Mammary epithelial cell (primary cell): ENCODE measurements at regions of chr17 and their contacts with region 1.

Region 1: DNA sequence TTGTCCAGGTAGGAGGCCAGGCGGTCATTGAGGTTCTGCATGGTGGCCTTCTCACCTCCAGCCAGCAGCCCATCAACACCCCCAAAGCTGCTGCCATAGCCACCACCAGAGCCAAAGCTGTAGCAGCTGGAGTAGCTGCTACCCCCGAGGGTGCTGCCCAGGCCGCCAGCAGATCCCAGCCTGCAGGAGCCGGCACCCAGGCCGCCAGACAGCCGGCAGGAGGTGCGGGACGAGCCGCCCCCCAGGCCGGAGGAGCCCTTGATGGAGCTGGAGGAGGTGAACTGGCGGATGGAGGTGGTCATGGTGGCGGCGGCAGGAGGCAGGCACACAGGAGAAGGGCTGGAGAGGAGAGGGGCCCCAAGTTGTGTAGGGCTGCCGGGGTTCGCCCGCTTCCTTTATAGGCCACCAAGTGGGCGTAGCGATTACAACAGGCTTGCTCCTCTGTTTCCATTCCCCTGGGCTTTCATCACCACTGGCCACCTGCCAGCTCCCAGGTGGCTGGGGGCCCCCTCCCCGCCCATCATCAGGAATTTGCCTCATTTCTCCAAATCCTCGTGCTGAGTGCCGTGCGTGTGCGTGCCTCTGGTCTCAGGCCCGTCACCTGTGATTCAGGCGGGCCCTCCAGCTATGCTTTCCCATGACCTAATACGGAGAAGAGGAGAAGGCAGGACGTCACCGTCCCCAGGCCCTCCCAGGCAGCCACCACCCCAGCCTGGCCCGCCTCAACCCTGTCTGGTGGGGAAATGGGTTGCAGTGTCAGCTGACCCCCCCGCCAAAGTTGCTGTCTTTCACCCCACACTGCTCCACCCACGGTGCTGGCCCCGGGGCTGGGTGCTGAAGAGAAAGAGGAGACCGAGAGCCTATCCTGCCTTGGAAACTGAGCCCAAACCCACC is at the start of gene KRT17:
- DNase-seq: peak; percentile 99
- H3K4me3 ChIP-seq: peak within 1 kb of the TSS; percentile 57 to 86 (median 70)
- H3K27ac ChIP-seq: peak within 1 kb of the TSS; percentile 98
- H3K4me1 ChIP-seq: peaks cover 63% of the 10 kb centered on the region
- H3K27me3 ChIP-seq: no peaks in the 10 kb centered on the region
- CTCF ChIP-seq: peak in 1 of 2 donors; percentile 19
- total RNA-seq, gene KRT17: 10,365 to 24,723 TPM

Region 2: GRCh38 chr17:40956401-40957254 is 667.8 kb before region 1 on chr17:
- CTCF ChIA-PET with region 1: no interaction called
- dilution Hi-C with region 1: no loop called
- in situ Hi-C with region 1: no loop called
- intact Hi-C with region 1: loop called (anchors 1 kb)
- DNase-seq: peak; percentile 99
- H3K4me3 ChIP-seq: no peak overlapping the region
- H3K27ac ChIP-seq: peak overlapping the region; percentile 99
- H3K4me1 ChIP-seq: peaks cover 75% of the 10 kb centered on the region
- H3K27me3 ChIP-seq: no peaks in the 10 kb centered on the region
- CTCF ChIP-seq: no peak

Region 3: GRCh38 chr17:41579484-41580243 is 44.8 kb before region 1 on chr17:
- CTCF ChIA-PET with region 1: no interaction called
- dilution Hi-C with region 1: no loop called
- in situ Hi-C with region 1: loop called in 1 of 2 experiments (anchors 5 kb)
- intact Hi-C with region 1: loop called (anchors 1 kb)
- DNase-seq: peak; percentile 98
- H3K4me3 ChIP-seq: no peak overlapping the region
- H3K27ac ChIP-seq: peak overlapping the region; percentile 97
- H3K4me1 ChIP-seq: peaks cover 63% of the 10 kb centered on the region
- H3K27me3 ChIP-seq: no peaks in the 10 kb centered on the region
- CTCF ChIP-seq: peak; percentile 93 to 96

Region 4: GRCh38 chr17:41588126-41588810 is 36.2 kb before region 1 on chr17:
- CTCF ChIA-PET with region 1: no interaction called
- dilution Hi-C with region 1: loop called (anchors 5 kb)
- in situ Hi-C with region 1: loop called in 1 of 2 experiments (anchors 5 kb)
- intact Hi-C with region 1: no loop called
- DNase-seq: peak; percentile 69
- H3K4me3 ChIP-seq: no peak overlapping the region
- H3K27ac ChIP-seq: peak overlapping the region; percentile 82
- H3K4me1 ChIP-seq: peaks cover 29% of the 10 kb centered on the region
- H3K27me3 ChIP-seq: no peaks in the 10 kb centered on the region
- CTCF ChIP-seq: peak in 1 of 2 donors; percentile 19

Region 5: DNA sequence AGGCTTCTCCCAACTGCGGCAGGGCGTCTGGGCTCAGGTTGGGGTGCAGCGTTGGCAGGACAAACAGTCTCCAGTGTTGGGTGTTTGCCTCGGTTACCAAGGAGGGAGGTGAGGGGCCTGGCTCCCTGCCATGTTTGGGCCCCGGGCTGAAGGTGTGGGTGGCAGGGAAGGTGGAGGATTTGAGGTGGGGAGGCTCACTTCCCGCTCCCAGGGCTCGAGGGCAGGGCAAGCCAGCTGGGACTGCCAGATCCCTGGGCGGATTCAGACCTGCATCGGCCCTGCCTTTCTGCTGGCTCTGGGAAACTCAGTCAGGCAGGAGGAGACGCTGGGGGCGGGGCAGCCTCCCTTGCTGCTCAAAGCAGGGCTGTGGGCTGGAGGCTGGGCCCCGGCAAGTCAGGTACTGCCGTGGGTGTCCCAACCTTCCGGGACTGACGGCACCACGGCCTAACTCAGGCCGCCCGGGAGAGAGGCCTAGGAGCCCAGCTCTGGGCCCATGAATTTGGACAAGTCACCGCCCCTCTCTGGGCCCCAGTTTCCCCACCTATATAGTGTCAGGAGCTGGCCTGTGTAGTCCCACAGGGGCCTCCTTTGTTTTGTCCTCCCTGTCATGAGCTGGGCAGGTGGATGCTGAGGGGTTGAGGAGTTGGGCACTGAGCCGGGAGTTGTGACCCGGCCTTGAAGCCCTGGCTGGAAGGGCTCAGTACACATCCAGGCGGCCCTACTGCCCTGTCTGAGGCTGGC is 31.3 kb after region 1 on chr17:
- CTCF ChIA-PET with region 1: no interaction called
- dilution Hi-C with region 1: loop called (anchors 5 kb)
- in situ Hi-C with region 1: no loop called
- intact Hi-C with region 1: loop called (anchors 1 kb)
- DNase-seq: peak; percentile 100
- H3K4me3 ChIP-seq: no peak overlapping the region
- H3K27ac ChIP-seq: peak overlapping the region; percentile 100
- H3K4me1 ChIP-seq: peaks cover 92% of the 10 kb centered on the region
- H3K27me3 ChIP-seq: no peaks in the 10 kb centered on the region
- CTCF ChIP-seq: no peak

Region 6: DNA sequence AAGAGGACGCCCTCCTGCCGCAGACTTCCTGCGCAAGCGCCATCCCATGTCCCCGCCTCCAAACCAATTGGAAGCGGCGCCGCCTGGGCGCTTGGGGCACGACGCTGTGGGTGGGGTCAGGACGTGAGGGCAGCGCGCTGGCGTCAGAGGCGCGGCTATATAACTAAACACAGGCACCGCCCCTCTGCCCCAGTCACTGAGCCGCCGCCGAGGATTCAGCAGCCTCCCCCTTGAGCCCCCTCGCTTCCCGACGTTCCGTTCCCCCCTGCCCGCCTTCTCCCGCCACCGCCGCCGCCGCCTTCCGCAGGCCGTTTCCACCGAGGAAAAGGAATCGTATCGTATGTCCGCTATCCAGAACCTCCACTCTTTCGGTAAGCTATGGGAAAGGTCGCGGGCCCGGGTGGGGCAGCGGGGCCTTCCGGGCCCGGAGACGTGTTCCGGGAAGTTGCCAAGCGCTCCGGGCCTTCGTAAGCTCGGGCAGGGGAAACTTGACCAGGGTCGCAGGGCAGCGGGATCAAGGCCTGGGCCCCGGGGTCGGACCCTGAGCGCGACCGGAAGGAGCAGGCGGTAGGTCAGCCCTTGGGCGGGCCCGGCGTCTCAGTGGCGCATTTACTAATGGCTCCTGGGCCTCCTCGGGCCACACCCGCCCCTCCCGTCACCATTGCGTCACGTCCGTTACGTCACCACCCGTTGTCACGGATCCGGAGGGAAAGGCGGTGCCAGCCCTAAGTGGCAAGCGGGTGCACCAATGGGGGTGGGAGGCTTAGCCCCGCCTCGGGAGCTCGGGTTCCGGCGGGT is 64.4 kb after region 1 on chr17 and contains the start of gene EIF1:
- CTCF ChIA-PET with region 1: no interaction called
- dilution Hi-C with region 1: no loop called
- in situ Hi-C with region 1: no loop called
- intact Hi-C with region 1: loop called (anchors 1 kb)
- DNase-seq: peak; percentile 100
- H3K4me3 ChIP-seq: peak within 1 kb of the TSS; percentile 56 to 76 (median 74)
- H3K27ac ChIP-seq: peak within 1 kb of the TSS; percentile 96
- H3K4me1 ChIP-seq: peaks cover 19% of the 10 kb centered on the region
- H3K27me3 ChIP-seq: no peaks in the 10 kb centered on the region
- CTCF ChIP-seq: no peak
- total RNA-seq, gene EIF1: 78.9 to 981 TPM